Activated T-helper 1 cell treated with anti-CD3 and anti-CD28 coated beads, Interleukin-12 subunit alpha, Interleukin-12 subunit beta, Interleukin-2, Interleukin-4 antibody, amounts not matched to agents 30 ng/mL and 10 ng/mL and 1 ng/mL, durations not matched to agents 14 hours and 24 hours and 36 hours (primary cell): ENCODE measurements at regions of chr17 and their contacts with region 1.

Region 1: DNA sequence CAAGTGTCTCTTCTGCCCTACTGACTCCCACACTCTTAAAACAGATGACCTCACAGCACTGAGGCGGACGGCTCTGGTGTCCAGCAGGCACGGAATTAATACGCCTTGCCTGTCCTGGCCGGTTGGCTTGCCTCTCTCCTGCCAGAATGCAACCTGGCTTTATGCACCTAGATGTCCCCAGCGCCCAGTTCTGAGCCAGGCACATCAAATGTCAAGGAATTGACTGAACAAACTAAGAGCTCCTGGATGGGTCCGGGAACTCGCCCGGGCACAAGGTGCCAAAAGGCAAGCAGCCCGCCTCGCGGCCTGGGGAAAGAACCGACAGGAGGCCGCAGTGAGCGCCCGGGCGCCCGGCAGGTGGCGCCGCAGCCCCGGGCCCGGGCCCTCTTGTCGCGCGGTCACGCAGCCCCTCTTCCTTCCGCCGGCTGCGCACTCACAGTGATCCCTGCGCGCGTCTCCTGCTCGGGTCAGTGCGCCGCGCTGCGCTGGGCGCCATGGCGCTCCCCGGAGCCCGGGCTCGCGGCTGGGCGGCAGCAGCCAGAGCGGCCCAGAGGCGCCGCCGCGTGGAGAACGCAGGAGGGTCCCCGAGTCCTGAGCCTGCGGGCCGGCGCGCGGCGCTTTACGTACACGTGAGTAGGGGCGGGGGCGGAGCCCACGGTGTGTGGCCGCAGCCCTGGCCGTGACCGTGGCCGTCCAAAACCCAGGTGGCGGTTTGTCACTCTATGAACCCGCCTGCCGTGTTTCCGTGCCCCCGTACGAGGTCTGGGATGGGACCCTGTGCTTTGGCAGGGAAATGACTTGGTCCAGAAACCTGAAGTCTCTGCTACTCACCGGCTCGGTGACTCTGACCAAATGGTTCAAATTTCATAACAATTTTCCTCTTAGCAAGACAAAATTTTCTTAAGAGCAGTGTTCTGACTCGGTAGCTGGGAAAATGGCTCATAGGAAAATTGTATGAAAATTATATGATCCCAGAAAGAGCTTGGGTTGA is at the start of gene RSAD1:
- DNase-seq: peak; percentile 79
- H3K4me3 Mint-ChIP-seq: peak within 1 kb of the TSS; percentile 91
- H3K27ac Mint-ChIP-seq: peak within 1 kb of the TSS; percentile 81
- H3K4me1 Mint-ChIP-seq: peaks cover 27% of the 10 kb centered on the region
- H3K27me3 Mint-ChIP-seq: peaks cover 6% of the 10 kb centered on the region
- total RNA-seq, gene RSAD1: 53.4 and 54.2 TPM in 2 replicates

Region 2: GRCh38 chr17:50200457-50201275 is 278.0 kb before region 1 on chr17:
- intact Hi-C with region 1: loop called (anchors 1 kb)
- DNase-seq: peak; percentile 74
- H3K4me3 Mint-ChIP-seq: peak overlapping the region; percentile 77
- H3K27ac Mint-ChIP-seq: peak overlapping the region; percentile 79
- H3K4me1 Mint-ChIP-seq: peaks cover 17% of the 10 kb centered on the region
- H3K27me3 Mint-ChIP-seq: peaks cover 70% of the 10 kb centered on the region

Region 3: GRCh38 chr17:50397111-50397918 is 81.4 kb before region 1 on chr17 and contains the start of gene LRRC59:
- intact Hi-C with region 1: loop called (anchors 1 kb)
- DNase-seq: peak; percentile 92
- H3K4me3 Mint-ChIP-seq: peak within 1 kb of the TSS; percentile 99
- H3K27ac Mint-ChIP-seq: peak within 1 kb of the TSS; percentile 96
- H3K4me1 Mint-ChIP-seq: peaks cover 31% of the 10 kb centered on the region
- H3K27me3 Mint-ChIP-seq: no peaks in the 10 kb centered on the region
- total RNA-seq, gene LRRC59: 113 and 116 TPM in 2 replicates

Region 4: DNA sequence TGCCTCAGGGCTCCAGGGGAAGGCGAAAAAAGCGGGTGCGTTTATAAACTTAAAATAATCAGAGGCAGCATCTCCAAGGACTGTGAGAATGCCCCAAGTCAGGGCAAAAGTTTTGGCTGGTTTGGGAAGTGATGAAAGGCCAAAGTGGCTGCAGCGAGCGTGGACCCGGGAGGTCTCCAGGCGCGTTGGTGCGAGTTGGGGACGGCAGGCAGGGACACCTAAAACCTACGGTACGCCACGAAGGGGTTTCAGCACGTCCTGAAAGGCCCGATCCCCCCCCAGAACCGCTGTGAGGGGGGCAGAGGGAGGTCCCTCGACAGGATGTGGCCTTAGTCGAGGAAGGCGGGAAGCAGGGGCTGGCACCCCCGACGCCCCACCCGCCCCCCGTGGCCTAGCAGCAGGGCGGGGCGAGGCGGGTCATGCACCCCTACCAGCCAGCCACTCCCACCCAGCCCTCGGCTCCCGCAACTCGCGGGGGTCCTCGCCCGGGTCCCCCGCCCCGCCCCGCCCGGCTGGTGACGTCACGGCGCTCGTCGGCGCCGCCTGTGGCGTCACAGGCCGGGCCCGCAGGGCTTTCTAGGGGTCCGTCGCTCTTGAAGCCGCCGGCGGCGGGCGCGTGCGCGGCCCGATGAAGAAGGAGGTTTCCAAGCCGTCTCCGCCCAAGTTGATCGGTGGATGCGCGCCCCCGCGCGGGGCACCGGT is 29.3 kb after region 1 on chr17 and contains the start of gene MYCBPAP:
- intact Hi-C with region 1: loop called (anchors 1 kb)
- DNase-seq: peak; percentile 82
- H3K4me3 Mint-ChIP-seq: peak within 1 kb of the TSS; percentile 91
- H3K27ac Mint-ChIP-seq: peak within 1 kb of the TSS; percentile 91
- H3K4me1 Mint-ChIP-seq: peaks cover 62% of the 10 kb centered on the region
- H3K27me3 Mint-ChIP-seq: peaks cover 5% of the 10 kb centered on the region
- total RNA-seq, gene MYCBPAP: 2.6 and 3.8 TPM in 2 replicates

Region 5: GRCh38 chr17:50560185-50560824 is 81.6 kb after region 1 on chr17 and contains the start of gene CACNA1G:
- intact Hi-C with region 1: loop called (anchors 1 kb)
- DNase-seq: peak; percentile 87
- H3K4me3 Mint-ChIP-seq: peak within 1 kb of the TSS; percentile 70
- H3K27ac Mint-ChIP-seq: no peak within 1 kb of the TSS
- H3K4me1 Mint-ChIP-seq: peaks cover 11% of the 10 kb centered on the region
- H3K27me3 Mint-ChIP-seq: peaks cover 59% of the 10 kb centered on the region
- total RNA-seq, gene CACNA1G: 0.05 and 0.07 TPM in 2 replicates

Region 6: DNA sequence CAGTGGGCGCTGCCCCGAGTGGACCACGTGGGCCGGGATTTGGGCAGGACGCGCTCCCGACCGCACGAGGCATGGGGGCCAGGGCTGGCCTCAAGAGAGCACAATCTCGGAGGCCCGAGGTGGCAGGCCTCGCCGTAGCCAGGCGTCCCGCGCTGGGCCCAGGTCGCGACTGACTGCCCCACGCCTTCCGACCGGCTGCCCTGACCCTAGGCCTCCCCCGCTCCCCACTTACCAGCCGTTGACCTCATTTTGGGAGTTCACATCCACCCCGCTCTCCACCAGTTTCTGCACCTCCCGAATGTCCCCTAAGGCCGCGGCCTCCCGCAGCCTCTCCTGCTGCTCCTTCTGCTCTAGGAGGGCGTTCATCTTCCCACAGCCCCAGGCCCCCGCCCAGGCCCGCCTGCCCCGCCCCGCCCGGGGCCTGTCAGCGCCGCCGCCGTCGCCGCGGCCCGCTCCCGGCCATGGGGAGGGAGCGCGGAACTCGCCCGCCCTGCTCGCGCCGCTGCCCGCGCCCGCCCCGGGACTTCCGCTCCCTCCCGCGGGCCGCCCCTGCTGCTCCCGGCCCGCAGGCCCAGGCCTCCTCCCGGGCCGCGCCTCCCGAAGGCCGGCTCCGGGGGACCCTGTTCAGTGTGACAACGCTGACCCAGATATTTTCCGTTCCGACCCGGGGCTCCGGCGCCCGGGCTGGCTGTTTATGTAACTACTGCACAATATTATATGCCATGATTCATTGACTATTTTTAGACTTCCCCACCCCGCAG is 228.8 kb after region 1 on chr17 and contains the start of gene ANKRD40:
- intact Hi-C with region 1: loop called (anchors 2 kb)
- DNase-seq: peak; percentile 90
- H3K4me3 Mint-ChIP-seq: peak within 1 kb of the TSS; percentile 95
- H3K27ac Mint-ChIP-seq: peak within 1 kb of the TSS; percentile 97
- H3K4me1 Mint-ChIP-seq: peaks cover 40% of the 10 kb centered on the region
- H3K27me3 Mint-ChIP-seq: peaks cover 3% of the 10 kb centered on the region
- total RNA-seq, gene ANKRD40: 47.0 and 50.3 TPM in 2 replicates